A549 (cell line): ENCODE measurements at regions of chr2 and their contacts with region 1.

Region 1: GRCh38 chr2:86079981-86080911 is 25.4 kb downstream of the POLR1A start:
- DNase-seq: peak; percentile 56 to 82
- ATAC-seq: peak; percentile 87 to 95
- H3K4me3 ChIP-seq: no peak overlapping the region
- H3K27ac ChIP-seq: peak overlapping the region in 1 of 2 experiments; percentile 53; a peak in 3 of 6 replicates
- H3K4me1 ChIP-seq: peaks cover 22% of the 10 kb centered on the region; the same call in 2 of the 3 replicates
- CTCF ChIP-seq: peak; percentile 93
- EP300 ChIP-seq: no peak
- POLR2A ChIP-seq: no peak
- RAD21 ChIP-seq: peak; percentile 86 to 89

Region 2: DNA sequence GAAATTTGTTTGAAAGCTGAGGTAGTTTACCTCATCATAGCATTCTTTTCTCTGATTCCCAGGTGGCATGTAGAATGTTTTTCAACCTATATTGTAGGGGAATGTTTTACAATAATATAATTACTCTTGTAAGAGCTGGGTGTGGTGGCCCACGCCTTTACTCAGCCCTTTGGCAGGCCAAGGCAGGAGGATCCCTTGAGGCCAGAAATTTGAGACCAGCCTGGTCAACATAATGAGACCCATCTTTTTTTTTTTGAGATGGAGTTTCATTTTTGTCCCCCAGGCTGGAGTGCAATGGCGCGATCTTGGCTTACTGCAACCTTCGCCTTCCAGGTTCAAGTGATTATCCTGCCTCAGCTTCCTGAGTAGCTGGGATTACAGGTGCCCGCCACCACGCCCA is 460.6 kb before region 1 on chr2:
- CTCF ChIA-PET with region 1: interaction called, 14 read pairs
- POLR2A ChIA-PET with region 1: no interaction called
- DNase-seq: no peak
- ATAC-seq: no peak
- H3K4me3 ChIP-seq: no peak overlapping the region
- H3K27ac ChIP-seq: no peak overlapping the region
- H3K4me1 ChIP-seq: peaks cover 13% of the 10 kb centered on the region
- CTCF ChIP-seq: no peak
- EP300 ChIP-seq: no peak
- POLR2A ChIP-seq: no peak
- RAD21 ChIP-seq: no peak

Region 3: DNA sequence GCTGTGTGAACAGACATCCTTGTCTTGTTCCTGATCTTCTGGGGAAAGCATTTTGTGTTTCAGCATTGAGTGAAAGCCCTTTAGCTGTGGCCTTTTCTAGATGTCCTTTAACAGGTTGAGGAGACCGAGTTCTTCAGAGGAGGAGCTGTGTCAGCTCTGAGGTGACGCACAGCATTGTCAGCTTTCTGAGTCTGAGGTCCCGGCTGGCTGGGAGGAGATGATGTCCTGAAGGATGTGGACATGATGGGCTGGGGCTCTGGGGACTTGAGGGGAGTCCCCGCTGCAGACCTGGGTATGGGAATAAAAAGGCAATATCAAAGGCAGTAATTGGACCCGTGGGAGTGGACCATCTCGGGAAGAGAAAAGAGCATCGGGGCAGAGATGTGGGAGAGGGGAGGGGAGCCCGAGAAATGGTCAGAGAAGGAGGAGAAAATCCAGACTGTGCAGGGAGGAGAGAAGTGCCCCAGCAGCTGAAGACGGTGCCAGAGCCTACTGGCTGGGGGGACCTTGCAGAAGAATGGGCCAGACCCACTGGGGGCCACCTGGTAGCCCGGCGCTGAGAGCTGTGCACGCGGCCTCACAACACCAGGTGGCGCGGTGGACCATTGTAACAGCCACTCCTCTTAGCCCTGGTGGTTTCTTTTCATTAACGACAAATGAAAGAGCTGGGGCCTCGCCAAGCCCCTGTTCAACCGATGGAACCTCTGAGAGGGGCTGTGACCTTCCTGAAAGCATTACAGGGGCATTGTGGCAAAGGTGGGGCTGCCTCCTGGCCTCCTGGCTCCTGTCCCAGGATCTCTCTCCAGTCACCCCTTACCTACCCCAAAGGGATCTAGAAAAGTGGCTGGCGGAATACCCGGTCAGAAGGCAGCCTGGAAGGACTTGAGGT is 253.0 kb before region 1 on chr2:
- CTCF ChIA-PET with region 1: interaction called, 766 read pairs
- POLR2A ChIA-PET with region 1: interaction called, 11 read pairs
- DNase-seq: peak; percentile 72 to 88
- ATAC-seq: peak; percentile 95 to 99
- H3K4me3 ChIP-seq: peak overlapping the region; percentile 21; the same call in 1 of the 3 replicates
- H3K27ac ChIP-seq: peak overlapping the region; percentile 74 to 84
- H3K4me1 ChIP-seq: peaks cover 8% of the 10 kb centered on the region
- CTCF ChIP-seq: peak; percentile 96
- EP300 ChIP-seq: no peak
- POLR2A ChIP-seq: no peak
- RAD21 ChIP-seq: peak; percentile 99

Region 4: DNA sequence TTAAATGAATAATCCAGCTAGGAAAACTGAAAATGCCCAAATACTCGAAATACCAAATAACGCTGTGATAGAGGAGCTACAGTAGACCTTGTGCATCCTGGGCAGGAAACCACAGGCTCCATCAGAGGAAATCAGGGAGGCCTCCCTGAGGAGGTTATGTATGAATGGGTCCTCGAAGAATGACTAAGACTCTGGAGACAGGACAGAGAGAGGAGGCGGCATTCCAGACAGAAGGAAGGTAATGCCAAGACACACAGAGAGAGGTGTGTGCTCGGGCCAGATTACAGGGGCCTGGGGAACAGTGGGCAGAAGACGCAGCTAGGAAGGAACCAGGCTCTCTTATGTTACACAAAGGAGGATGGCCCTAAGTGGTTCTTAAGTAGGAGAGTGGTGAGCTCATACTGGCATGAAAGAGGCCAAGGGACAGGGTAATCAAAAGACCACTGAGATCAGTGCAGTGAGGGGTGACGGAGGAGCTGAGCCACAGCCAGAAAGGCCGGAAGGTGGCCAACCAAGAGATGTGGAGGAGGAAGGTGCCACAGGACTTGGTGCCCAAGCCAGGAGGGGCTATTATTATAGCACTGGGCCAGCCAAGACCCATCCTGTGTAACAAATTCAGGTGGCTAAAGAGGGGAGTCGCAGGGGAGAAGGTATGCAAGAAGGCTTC is 201.4 kb before region 1 on chr2:
- CTCF ChIA-PET with region 1: interaction called, 238 read pairs
- POLR2A ChIA-PET with region 1: no interaction called
- DNase-seq: no peak
- ATAC-seq: peak; percentile 34 to 61; a peak in 3 of 6 replicates
- H3K4me3 ChIP-seq: no peak overlapping the region
- H3K27ac ChIP-seq: peak overlapping the region in 1 of 2 experiments; percentile 9; a peak in 1 of 6 replicates
- H3K4me1 ChIP-seq: peaks cover 33% of the 10 kb centered on the region
- CTCF ChIP-seq: no peak
- EP300 ChIP-seq: no peak
- POLR2A ChIP-seq: no peak
- RAD21 ChIP-seq: no peak

Region 5: GRCh38 chr2:85981579-85982247 is 98.5 kb before region 1 on chr2:
- CTCF ChIA-PET with region 1: interaction called, 16 read pairs
- POLR2A ChIA-PET with region 1: no interaction called
- DNase-seq: no peak
- ATAC-seq: no peak
- H3K4me3 ChIP-seq: no peak overlapping the region
- H3K27ac ChIP-seq: no peak overlapping the region
- H3K4me1 ChIP-seq: peaks cover 15% of the 10 kb centered on the region
- CTCF ChIP-seq: no peak
- EP300 ChIP-seq: no peak
- POLR2A ChIP-seq: no peak
- RAD21 ChIP-seq: no peak

Region 6: DNA sequence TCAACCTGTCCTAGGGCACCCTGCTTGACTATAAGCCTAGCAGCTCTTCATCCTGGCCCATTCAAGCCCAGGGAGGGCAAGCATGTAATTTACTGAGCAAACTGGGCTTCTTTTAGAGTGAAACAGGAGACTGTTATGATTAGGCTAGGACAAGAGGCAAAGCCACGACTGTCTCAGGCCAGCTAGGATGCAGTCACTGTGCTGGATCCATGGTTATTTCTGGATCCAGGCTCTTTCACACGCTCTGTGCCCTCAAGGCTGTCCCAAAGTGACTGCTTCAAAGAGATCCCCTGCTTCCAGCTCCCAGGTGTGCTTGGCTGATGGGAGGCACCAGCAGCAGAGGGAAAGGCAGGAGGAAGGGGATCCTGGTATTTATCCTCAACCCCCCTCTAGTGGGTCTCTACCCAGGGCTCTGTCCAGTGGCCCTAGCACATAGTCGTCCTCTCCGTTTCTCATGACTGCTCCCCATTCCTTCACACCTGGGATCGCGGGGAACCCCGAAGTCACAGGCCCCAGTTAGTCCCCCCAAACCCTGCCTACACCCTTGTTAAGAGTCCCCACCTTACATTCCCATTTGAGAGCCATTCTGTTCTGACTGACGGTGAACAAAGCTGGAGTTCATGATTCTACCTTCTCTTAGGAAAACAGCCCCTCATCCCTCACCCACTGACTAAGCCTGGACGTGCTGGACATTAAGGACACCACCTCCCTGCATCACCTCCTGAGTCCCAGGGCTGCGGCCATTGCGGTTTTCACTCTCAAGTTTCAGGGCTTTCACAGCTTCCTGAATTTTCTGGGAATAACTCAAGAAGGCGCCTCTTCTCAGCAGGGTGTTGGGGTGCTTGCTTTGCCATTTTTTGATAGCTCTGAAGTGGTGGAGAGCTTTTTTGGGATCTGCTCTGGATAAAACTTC is 37.7 kb before region 1 on chr2:
- CTCF ChIA-PET with region 1: interaction called, 57 read pairs
- POLR2A ChIA-PET with region 1: no interaction called
- DNase-seq: no peak
- ATAC-seq: no peak
- H3K4me3 ChIP-seq: no peak overlapping the region
- H3K27ac ChIP-seq: no peak overlapping the region
- H3K4me1 ChIP-seq: no peaks in the 10 kb centered on the region; the same call in 2 of the 3 replicates
- CTCF ChIP-seq: no peak
- EP300 ChIP-seq: no peak
- POLR2A ChIP-seq: no peak
- RAD21 ChIP-seq: no peak

Region 7: DNA sequence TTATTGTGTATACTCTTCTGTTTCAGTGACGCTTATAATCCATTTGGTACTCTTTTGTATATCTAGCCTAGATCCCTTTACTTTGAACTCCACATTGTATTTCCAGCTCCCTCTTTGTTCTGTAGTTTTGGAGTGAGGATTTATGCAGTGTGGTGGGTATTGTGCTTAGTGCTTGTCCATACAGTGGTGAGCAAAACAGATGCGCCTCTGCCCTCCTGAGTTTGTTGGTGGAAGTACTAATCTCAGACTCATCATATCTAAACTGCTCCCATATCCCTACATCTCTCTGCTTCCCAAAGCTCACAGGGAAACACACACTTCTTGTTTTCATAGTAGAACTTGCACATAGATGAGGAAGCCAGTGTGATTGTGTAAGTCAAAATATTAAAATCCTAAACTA is 37.9 kb after region 1 on chr2:
- CTCF ChIA-PET with region 1: interaction called, 14 read pairs
- POLR2A ChIA-PET with region 1: no interaction called
- DNase-seq: peak in 1 of 2 experiments; percentile 24
- ATAC-seq: peak; percentile 68 to 69; a peak in 4 of 6 replicates
- H3K4me3 ChIP-seq: no peak overlapping the region
- H3K27ac ChIP-seq: no peak overlapping the region
- H3K4me1 ChIP-seq: peaks cover 6% of the 10 kb centered on the region; the same call in 1 of the 3 replicates
- CTCF ChIP-seq: no peak
- EP300 ChIP-seq: no peak
- POLR2A ChIP-seq: no peak
- RAD21 ChIP-seq: 0 out of 5 replicates have a peak, but pooled peaks of 1 of the 2 experiments have one; percentile 9

Region 8: GRCh38 chr2:86368161-86368824 is 288.0 kb after region 1 on chr2:
- CTCF ChIA-PET with region 1: no interaction called
- POLR2A ChIA-PET with region 1: no interaction called
- DNase-seq: peak; percentile 35 to 67
- ATAC-seq: peak; percentile 37 to 66; a peak in 4 of 6 replicates
- H3K4me3 ChIP-seq: no peak overlapping the region
- H3K27ac ChIP-seq: no peak overlapping the region
- H3K4me1 ChIP-seq: no peaks in the 10 kb centered on the region
- CTCF ChIP-seq: peak; percentile 67
- EP300 ChIP-seq: no peak
- POLR2A ChIP-seq: no peak
- RAD21 ChIP-seq: peak; percentile 60 to 74